ENCODE measurements at regions of chr12 and their contacts with region 1.

Region 1: DNA sequence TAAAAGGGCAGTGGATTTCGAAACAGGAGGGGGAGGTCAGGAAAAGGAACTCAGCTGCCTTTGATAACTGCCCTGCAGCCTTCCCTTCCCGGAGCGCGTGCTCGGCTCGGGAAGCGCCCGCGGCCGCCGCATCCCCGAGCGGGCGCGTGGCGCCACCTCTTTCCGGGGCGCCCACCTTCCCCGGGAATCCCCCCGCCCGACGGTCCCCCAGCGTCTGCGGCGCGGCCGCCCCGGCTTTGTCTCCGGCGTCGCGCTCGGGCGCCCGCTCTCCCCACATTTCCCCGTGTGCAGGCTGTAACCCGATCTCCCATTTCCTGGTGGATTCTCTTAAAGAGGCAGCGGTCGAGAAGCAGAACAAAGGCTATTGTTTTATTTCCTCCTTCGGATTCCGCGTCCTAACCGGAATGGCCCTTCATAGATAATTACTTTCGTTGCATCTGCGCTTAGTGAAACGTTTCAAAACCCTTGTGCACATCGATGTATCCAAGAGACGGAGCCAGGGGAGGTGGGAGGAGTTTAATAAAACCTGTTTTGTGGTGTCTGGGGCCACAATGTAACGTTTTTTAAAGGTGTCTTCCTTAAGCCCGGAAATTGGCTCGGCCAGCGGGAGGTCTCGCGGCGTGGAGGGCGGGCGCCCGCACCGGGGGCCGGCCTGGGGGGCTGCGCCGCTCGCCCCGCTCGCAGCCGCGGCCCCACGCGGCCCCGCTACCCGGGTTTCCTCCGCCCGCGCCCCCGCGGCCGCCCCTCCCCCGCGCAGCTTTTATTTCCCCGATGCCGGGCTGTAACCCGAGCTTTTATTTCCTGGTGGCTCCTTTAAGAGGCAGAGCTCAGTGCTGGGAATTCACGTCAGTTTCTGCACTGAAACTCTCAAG is at the start of gene ETV6:
- DNase-seq: peak; percentile 83 to 89
- H3K4me3 ChIP-seq: peak within 1 kb of the TSS; percentile 85
- H3K27ac ChIP-seq: peak within 1 kb of the TSS; percentile 99
- H3K4me1 ChIP-seq: peaks cover 29% of the 10 kb centered on the region
- H3K27me3 ChIP-seq: no peaks in the 10 kb centered on the region
- CTCF ChIP-seq: no peak
- total RNA-seq, gene ETV6: 52.1 and 62.8 TPM in 2 replicates

Region 2: GRCh38 chr12:11347810-11348209 is 301.3 kb before region 1 on chr12:
- CTCF ChIA-PET with region 1: no interaction called
- POLR2A ChIA-PET with region 1: no interaction called
- intact Hi-C with region 1: no loop called
- DNase-seq: no peak
- H3K4me3 ChIP-seq: no peak overlapping the region
- H3K27ac ChIP-seq: no peak overlapping the region
- H3K4me1 ChIP-seq: no peaks in the 10 kb centered on the region
- H3K27me3 ChIP-seq: no peaks in the 10 kb centered on the region
- CTCF ChIP-seq: peak; percentile 58

Region 3: DNA sequence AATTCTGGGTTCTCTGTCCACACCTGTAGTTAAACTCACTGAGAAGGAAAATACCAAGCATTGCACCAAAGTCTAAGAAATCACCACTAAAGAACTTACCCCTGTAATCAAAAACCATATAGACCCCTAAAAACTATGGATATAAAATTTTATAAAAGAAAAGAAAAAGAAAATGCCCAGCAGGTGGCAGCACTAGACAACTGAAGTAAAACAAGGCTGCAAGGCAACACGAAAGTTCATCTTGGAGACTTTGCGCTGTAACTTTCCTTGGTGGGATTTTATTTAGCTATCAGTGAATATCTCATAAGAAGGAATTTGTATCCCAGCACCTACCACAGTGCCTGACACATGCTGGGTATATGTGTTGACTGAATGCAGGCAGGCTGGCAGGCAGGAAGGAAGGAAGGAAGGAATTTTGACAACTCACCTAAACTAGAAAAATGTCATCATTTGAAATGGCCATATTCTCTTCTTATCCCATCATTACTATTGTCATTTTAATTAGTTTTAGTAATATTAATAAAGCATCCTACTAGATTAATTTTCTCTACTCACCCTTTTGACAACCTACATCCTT is 67.8 kb before region 1 on chr12:
- CTCF ChIA-PET with region 1: no interaction called
- POLR2A ChIA-PET with region 1: interaction called, 3 read pairs
- intact Hi-C with region 1: loop called (anchors 1 kb)
- DNase-seq: peak; percentile 56 to 82
- H3K4me3 ChIP-seq: no peak overlapping the region
- H3K27ac ChIP-seq: peak overlapping the region; percentile 94
- H3K4me1 ChIP-seq: peaks cover 49% of the 10 kb centered on the region
- H3K27me3 ChIP-seq: no peaks in the 10 kb centered on the region
- CTCF ChIP-seq: peak; percentile 84

Region 4: DNA sequence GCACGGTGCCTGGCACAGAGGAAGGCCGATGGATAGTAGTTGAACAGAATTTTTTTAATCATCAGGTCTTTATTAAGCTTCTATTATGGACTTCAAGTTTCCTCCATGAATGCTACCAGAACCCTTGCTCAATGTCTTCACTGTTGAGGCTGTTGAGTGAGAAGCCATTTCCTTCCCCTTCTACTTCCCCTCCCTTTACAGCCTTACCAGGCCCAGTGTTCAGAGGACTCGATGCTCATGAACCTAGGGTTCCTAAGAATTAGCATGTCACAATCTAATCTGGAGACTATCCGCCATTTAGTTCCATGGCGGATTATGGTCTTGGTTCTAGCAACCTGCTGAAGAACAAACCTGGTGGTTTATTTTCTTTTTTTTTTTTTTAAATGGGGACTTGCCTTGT is 18.1 kb after region 1 on chr12:
- CTCF ChIA-PET with region 1: no interaction called
- POLR2A ChIA-PET with region 1: interaction called, 15 read pairs
- intact Hi-C with region 1: no loop called
- DNase-seq: no peak
- H3K4me3 ChIP-seq: no peak overlapping the region
- H3K27ac ChIP-seq: no peak overlapping the region
- H3K4me1 ChIP-seq: peaks cover 13% of the 10 kb centered on the region
- H3K27me3 ChIP-seq: no peaks in the 10 kb centered on the region
- CTCF ChIP-seq: no peak

Region 5: DNA sequence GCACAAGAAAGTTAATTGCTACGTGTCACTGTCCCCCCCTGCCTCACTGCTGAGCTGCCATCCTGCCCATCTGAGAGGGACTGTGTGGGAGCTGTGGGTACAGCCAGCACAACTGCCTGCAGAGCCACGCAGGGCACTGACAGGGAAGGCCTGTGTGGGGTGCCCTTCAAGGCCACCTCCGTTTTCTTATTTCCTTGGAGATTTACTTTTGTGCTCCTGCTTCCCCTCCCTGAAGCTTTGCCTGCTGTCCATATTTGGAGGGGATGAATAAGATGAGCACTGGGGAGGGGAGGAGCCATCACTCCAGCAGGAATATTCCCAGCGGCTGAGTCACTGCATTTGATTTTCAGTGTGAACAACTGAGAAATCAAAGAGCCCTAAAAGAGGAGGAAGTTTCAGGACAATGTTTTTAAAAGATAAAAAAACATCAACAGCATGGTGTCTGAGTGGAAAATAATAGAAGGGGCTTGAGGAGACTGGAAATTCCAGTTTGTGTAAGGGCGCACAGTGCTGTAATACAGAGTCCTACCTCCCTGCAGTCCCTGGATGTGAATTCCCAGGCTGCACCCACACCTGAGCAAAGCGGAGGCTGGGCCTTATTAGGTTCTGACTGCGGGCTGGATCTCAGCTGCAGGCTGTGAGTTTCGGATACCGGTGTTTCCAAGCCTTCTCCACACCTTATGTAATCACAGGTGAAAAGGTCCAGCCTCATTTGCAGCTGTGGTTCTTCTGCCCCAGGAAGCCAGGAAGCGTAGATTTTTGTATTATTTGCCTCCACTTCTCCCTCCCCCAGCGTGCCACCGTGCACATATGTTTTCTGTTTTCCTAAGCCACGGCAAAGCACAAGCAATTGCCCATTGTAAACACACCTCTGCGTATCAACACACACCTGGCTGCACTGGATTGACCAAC is 229.1 kb after region 1 on chr12:
- CTCF ChIA-PET with region 1: no interaction called
- POLR2A ChIA-PET with region 1: no interaction called
- intact Hi-C with region 1: loop called (anchors 1 kb)
- DNase-seq: peak; percentile 85 to 93
- H3K4me3 ChIP-seq: peak overlapping the region; percentile 45; the same call in 1 of the 2 replicates
- H3K27ac ChIP-seq: peak overlapping the region; percentile 96
- H3K4me1 ChIP-seq: peaks cover 64% of the 10 kb centered on the region
- H3K27me3 ChIP-seq: no peaks in the 10 kb centered on the region
- CTCF ChIP-seq: no peak

Region 6: DNA sequence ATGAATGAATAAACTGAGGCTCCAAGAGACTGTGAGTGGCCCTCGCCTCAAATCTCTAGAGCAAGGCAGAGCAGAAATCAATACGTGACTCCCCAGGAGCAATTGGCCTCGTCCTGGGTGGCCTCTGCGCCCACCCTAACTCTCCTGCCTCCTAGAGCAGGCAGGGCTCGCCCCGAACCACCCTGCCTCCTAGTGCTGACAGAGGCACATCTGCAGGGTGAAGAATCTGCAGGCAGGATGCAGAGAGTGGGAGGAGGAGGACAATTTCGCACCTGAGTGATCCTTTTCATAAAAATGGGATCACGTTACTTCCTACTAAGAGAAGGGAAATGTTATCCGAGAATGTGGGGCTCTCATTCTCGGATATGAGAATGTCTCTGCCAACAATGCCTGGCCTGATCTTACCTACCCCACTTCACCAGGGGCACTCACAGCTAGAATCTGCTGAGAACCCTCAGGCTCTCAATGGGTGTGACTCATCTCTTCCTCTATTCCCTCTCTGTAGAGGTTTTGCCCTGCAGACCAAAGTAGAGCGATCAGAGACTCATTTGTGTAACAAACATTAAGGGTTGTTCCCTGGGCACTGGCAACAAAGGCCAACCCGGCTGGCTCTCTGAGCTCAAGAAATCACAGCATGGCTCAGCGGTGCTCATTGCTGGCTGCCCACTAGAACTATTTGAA is 360.0 kb after region 1 on chr12:
- CTCF ChIA-PET with region 1: interaction called, 13 read pairs
- POLR2A ChIA-PET with region 1: interaction called, 3 read pairs
- intact Hi-C with region 1: loop called (anchors 2 kb)
- DNase-seq: peak; percentile 80 to 98
- H3K4me3 ChIP-seq: no peak overlapping the region
- H3K27ac ChIP-seq: peak overlapping the region; percentile 94
- H3K4me1 ChIP-seq: peaks cover 45% of the 10 kb centered on the region
- H3K27me3 ChIP-seq: no peaks in the 10 kb centered on the region
- CTCF ChIP-seq: no peak; the same call in 1 of the 2 replicates

Region 7: GRCh38 chr12:12779529-12779928 is 1130.5 kb after region 1 on chr12:
- CTCF ChIA-PET with region 1: no interaction called
- POLR2A ChIA-PET with region 1: interaction called, 10 read pairs
- intact Hi-C with region 1: no loop called
- DNase-seq: peak in 1 of 2 experiments; percentile 92
- H3K4me3 ChIP-seq: no peak overlapping the region
- H3K27ac ChIP-seq: peak overlapping the region; percentile 37
- H3K4me1 ChIP-seq: peaks cover 44% of the 10 kb centered on the region
- H3K27me3 ChIP-seq: no peaks in the 10 kb centered on the region
- CTCF ChIP-seq: no peak